ENCODE measurements at regions of chr9 and their contacts with region 1.

Region 1: DNA sequence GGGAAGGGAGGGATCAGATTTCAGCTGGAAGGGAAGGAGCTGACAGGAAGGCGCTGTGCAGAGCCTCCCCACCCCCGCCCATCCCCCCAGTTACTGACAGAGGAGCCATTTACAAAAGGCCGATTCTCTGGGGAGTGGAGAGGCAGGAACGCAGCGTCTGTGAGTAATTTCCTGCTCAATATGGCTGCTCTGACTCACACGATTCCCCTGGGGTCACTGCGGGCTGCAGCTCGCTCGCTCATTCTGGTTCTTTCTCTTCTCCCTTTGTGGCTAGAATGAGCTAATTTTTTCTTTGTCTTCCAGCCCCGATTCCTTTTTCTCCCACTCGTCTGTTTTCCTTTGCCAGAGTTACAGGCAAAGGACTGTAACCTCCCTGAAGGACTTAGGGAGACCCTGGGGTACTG is 28.8 kb downstream of the PTPA start:
- DNase-seq: peak; percentile 71 to 87 (median 82)
- ATAC-seq: peak; percentile 69 to 81 (median 76)
- H3K4me3 ChIP-seq: peak overlapping the region in 3 of 4 donors; percentile 3 to 48 (median 34)
- H3K27ac ChIP-seq: peak overlapping the region; percentile 93 to 100 (median 94)
- H3K4me1 ChIP-seq: peaks cover 15 to 45% (median 25%) of the 10 kb centered on the region in 3 donors
- H3K27me3 ChIP-seq: no peaks in the 10 kb centered on the region
- CTCF ChIP-seq: no peak

Region 2: GRCh38 chr9:129610473-129611301 is 470.7 kb after region 1 on chr9:
- intact Hi-C with region 1: loop called (anchors 5 to 10 kb)
- DNase-seq: peak; percentile 71 to 91 (median 84)
- ATAC-seq: peak; percentile 75 to 77 (median 76)
- H3K4me3 ChIP-seq: peak overlapping the region; percentile 11 to 71 (median 44)
- H3K27ac ChIP-seq: peak overlapping the region in 3 of 4 donors; percentile 52 to 85 (median 81)
- H3K4me1 ChIP-seq: peaks cover 4 to 8% (median 4%) of the 10 kb centered on the region in 3 donors
- H3K27me3 ChIP-seq: no peaks in the 10 kb centered on the region
- CTCF ChIP-seq: peak; percentile 92 to 96 (median 94)

Measured in pancreas (tissue), 10 donors.